ENCODE measurements at regions of chr7 and their contacts with region 1.

Region 1: GRCh38 chr7:99123571-99124041 is 20.3 kb downstream of the SMURF1 start:
- DNase-seq: no peak

Region 2: DNA sequence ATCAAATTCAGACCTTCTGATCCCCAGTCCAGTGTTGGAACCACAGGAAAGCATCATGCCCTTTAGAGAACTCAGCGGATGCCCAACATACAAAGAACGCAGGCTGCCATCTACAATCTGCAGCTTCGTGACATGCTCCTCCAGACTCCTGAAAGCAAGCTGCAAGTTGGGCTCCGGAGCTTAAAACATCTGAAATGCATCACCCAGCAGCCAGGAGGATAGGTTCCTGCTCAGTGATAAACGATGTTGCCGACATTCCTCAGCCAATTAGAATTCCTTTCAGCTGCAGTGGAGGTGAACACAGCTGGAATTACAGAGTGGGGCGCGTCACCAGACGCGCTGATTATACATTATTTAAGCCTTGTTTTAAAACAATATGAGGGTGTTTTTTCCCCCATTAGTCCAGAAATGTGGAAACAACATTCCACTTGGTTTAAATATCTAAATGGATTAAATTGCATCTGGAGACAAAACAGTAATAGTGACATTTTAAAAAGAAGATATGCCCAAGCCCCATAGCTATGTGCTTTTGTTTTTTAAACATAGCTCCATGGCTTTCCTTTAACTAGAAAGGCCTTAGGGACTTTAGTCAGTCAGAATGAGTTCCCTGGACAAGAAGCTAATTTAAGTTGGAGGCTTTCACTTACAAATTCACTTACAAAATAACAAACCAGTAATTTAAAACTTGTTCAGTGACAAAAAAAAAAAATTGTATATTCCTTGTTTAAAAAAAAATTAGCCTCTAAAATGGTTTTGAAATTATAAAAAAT is 14.0 kb after region 1 on chr7:
- intact Hi-C with region 1: loop called in 1 of 2 experiments (anchors 2 kb)
- DNase-seq: no peak

Region 3: DNA sequence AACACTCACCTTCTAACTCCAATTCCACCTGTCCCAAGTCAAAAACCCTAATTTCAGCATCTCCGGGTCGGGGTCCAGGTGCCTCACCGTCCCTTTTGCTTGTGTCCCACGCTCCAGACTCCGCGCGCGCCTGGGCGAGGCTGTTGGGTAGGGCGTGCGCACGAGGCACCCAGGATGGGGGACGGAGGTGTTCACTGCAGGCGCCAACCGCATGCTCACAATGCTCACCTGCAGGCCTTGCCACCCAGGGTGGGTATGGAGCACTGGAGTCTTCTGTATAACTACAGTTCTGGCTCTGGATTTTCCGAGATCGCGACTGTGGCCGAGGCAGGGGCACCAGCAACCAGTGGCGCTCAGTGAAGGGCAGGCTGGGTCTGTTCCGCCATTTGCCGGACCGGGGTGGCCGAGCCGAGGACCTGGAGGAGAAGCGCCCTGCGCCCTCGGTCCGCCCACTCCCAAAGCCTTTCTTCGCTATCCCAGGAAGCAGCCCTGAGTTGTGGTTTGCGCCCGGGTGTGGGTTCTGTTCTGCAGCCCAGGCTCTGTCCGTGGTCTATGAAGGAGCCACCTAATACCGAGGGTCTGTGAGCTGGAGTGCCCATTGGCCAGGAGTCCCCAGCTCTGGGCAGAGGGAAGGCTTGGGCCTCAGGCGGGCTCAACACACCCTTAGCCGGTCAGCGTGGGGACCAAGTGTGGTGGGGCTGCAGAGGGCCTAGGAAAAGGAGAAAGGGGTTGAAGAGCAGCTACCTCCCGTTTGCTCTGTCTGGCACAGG is 419.7 kb after region 1 on chr7:
- intact Hi-C with region 1: no loop called
- DNase-seq: no peak